ENCODE measurements at regions of chr13 and their contacts with region 1.

Region 1: DNA sequence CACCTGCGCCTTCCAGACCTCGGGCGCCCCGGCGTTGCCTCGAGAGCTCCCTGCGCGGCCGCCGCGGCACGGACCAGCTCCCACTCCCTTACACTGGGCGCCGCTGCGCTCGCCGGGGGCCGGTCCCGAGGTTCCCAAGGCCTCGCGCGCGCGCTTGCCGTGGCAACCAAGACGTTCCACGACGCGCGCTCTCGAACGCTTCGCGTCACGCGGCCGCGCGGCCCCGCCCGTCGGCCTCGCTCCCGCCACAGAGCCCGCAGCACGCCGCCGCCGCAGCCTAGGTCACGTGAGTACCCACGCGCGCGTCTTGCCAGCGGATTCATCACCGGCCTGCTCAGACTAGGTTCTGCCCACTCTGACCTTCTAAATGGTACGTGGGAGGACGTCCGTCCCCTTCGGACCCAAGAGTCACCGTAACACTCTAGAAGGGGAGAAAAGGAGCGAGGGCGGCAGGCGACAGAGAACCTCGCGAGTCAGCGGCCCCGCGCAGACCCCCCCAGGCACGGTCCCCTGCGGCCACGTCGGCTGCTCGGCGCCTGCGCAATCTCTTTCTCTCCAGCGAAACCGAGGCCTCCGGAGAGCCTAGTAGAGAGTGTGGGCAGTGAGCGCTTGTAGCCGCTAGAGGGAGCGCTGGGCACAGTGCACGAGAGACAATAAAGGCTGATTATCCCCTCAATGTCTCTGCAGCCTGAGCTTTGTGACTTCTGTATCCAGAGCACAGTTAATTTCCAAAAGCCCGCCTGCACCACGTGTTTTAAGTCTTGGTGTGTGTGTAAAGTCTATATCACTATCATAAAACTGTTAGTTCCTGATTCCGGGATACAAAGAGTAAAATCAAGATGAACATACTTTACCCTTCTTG is at the start of gene SPART:
- DNase-seq: peak; percentile 83
- H3K4me3 ChIP-seq: peak within 1 kb of the TSS; percentile 92 to 93 (median 92)
- H3K27ac ChIP-seq: peak within 1 kb of the TSS; percentile 96
- H3K4me1 ChIP-seq: peaks cover 26% of the 10 kb centered on the region
- H3K27me3 ChIP-seq: no peaks in the 10 kb centered on the region
- CTCF ChIP-seq: peak; percentile 98 to 99
- total RNA-seq, gene SPART: 53.5 to 56.0 TPM

Region 2: DNA sequence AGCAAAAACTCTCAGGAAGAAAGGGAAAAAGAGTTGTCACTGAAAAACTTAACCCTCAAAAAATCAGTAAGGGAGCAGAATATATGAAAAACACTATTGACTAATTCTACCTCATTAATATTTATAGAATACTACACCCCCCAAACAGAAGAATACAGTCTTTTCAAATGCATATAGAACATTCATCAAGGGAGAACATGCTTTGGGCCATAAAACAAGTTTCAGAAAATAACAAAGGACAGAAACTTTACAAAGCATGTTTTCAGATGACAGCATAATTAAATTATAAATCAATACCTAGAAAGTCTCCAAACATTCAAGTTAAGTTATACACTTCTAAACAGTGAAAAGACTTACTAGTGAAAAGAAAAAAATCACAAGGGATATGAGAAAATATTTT is 162.6 kb before region 1 on chr13:
- CTCF ChIA-PET with region 1: no interaction called
- dilution Hi-C with region 1: no loop called
- in situ Hi-C with region 1: no loop called
- intact Hi-C with region 1: no loop called
- DNase-seq: no peak
- H3K4me3 ChIP-seq: no peak overlapping the region
- H3K27ac ChIP-seq: no peak overlapping the region
- H3K4me1 ChIP-seq: no peaks in the 10 kb centered on the region
- H3K27me3 ChIP-seq: no peaks in the 10 kb centered on the region
- CTCF ChIP-seq: no peak

Region 3: GRCh38 chr13:36297366-36298338 is 48.8 kb before region 1 on chr13 and contains the start of gene CCDC169:
- CTCF ChIA-PET with region 1: no interaction called
- dilution Hi-C with region 1: loop called (anchors 5 kb)
- in situ Hi-C with region 1: no loop called
- intact Hi-C with region 1: loop called (anchors 5 kb)
- DNase-seq: peak; percentile 29
- H3K4me3 ChIP-seq: peak within 1 kb of the TSS; percentile 42 to 59 (median 56)
- H3K27ac ChIP-seq: no peak within 1 kb of the TSS
- H3K4me1 ChIP-seq: no peaks in the 10 kb centered on the region
- H3K27me3 ChIP-seq: no peaks in the 10 kb centered on the region
- CTCF ChIP-seq: no peak
- total RNA-seq, gene CCDC169: 0.83 to 0.89 TPM

Region 4: DNA sequence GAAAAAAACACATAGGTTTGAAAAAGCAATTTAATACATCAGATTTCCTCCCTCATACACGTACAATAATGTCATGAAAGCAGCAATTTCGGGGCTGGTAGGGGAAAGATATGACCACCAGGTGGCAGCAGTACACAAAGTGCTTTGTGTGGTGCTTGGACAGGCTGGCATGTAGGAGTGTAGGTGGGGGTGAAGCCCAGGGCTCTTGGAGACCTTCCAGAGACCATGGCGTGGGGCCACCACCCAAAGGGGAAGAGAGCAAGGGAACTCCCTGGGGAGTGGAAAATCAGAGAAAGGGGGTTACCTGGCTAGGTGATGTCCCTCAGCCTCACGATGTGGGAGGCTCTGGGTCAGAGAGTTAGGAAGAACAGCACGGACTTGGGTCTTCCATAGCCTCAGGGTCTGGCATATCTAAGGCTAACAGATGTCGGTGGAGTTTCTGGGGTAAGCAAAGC is 74.0 kb after region 1 on chr13:
- CTCF ChIA-PET with region 1: interaction called, 7 read pairs
- dilution Hi-C with region 1: loop called (anchors 5 kb)
- in situ Hi-C with region 1: no loop called
- intact Hi-C with region 1: loop called (anchors 5 kb)
- DNase-seq: peak; percentile 62
- H3K4me3 ChIP-seq: no peak overlapping the region
- H3K27ac ChIP-seq: no peak overlapping the region
- H3K4me1 ChIP-seq: peaks cover 35% of the 10 kb centered on the region
- H3K27me3 ChIP-seq: no peaks in the 10 kb centered on the region
- CTCF ChIP-seq: peak; percentile 89 to 94

Region 5: DNA sequence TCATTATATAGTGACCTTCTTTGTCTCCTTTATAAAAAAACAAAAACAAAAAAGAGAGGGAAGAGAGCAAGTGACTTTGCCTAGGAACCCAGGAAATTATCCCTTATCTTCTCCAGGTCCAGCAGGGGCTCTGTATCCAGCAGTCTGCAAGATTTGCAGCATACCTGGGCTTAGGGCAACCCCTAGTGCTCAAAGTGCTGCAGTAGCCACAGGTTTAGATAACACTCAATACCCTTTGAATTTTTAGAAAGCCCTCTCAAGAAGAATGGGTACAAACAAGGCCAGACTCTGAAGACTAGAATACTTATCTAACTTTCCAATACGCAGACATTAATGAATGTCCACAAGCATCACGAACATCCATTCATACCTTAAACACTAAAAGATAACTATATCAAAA is 129.0 kb after region 1 on chr13:
- CTCF ChIA-PET with region 1: no interaction called
- dilution Hi-C with region 1: no loop called
- in situ Hi-C with region 1: no loop called
- intact Hi-C with region 1: loop called (anchors 1 kb)
- DNase-seq: peak; percentile 45
- H3K4me3 ChIP-seq: no peak overlapping the region
- H3K27ac ChIP-seq: no peak overlapping the region
- H3K4me1 ChIP-seq: no peaks in the 10 kb centered on the region
- H3K27me3 ChIP-seq: no peaks in the 10 kb centered on the region
- CTCF ChIP-seq: peak; percentile 58 to 63

Region 6: GRCh38 chr13:36818804-36819738 is 472.6 kb after region 1 on chr13 and contains the start of gene RFXAP:
- CTCF ChIA-PET with region 1: no interaction called
- dilution Hi-C with region 1: no loop called
- in situ Hi-C with region 1: no loop called
- intact Hi-C with region 1: loop called (anchors 10 kb)
- DNase-seq: peak; percentile 75
- H3K4me3 ChIP-seq: peak within 1 kb of the TSS; percentile 71 to 90 (median 76)
- H3K27ac ChIP-seq: peak within 1 kb of the TSS; percentile 32
- H3K4me1 ChIP-seq: peaks cover 16% of the 10 kb centered on the region
- H3K27me3 ChIP-seq: no peaks in the 10 kb centered on the region
- CTCF ChIP-seq: no peak
- total RNA-seq, gene RFXAP: 3.3 to 4.4 TPM

Region 7: GRCh38 chr13:37023871-37024270 is 677.4 kb after region 1 on chr13:
- CTCF ChIA-PET with region 1: interaction called, 10 read pairs
- dilution Hi-C with region 1: no loop called
- in situ Hi-C with region 1: no loop called
- intact Hi-C with region 1: no loop called
- DNase-seq: peak; percentile 12
- H3K4me3 ChIP-seq: no peak overlapping the region
- H3K27ac ChIP-seq: no peak overlapping the region
- H3K4me1 ChIP-seq: no peaks in the 10 kb centered on the region
- H3K27me3 ChIP-seq: no peaks in the 10 kb centered on the region
- CTCF ChIP-seq: no peak